ENCODE measurements at regions of chr14 and their contacts with region 1.

Region 1: DNA sequence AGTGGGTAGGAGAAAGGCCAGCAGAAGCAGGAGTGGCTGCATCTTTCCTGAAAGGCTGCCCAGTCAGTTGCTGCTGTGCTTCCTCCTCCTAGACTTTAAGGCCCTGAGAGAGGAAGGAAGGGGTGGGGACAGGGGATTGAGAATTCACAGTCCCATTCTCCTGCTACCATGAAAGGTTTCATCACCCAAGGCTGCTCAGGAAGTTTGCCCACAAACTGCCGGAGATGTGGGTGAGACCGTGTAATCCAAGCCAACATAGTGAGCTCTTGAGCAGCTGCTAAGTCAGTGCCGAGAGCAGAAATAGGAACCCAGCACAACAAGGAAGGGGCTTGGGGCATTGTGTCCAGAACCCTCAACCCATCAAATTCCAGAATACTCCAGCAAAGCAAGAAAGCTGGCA is at the start of gene CTSG:
- ATAC-seq: no peak
- H3K4me3 ChIP-seq: no peak within 1 kb of the TSS
- H3K27ac ChIP-seq: no peak within 1 kb of the TSS
- H3K4me1 ChIP-seq: peaks cover 0 to 3% of the 10 kb centered on the region in 2 donors
- total RNA-seq, gene CTSG: 0.25 to 1.4 (median 0.85) TPM in 5 of 8 experiments, not detected in the others

Region 2: GRCh38 chr14:24481622-24482324 is 94.4 kb before region 1 on chr14:
- in situ Hi-C with region 1: loop called in 1 of 9 experiments (anchors 25 kb)
- ATAC-seq: peak in 3 of 8 experiments; percentile 60 to 83 (median 74)
- H3K4me3 ChIP-seq: no peak overlapping the region
- H3K27ac ChIP-seq: no peak overlapping the region
- H3K4me1 ChIP-seq: no peaks in the 10 kb centered on the region

Region 3: DNA sequence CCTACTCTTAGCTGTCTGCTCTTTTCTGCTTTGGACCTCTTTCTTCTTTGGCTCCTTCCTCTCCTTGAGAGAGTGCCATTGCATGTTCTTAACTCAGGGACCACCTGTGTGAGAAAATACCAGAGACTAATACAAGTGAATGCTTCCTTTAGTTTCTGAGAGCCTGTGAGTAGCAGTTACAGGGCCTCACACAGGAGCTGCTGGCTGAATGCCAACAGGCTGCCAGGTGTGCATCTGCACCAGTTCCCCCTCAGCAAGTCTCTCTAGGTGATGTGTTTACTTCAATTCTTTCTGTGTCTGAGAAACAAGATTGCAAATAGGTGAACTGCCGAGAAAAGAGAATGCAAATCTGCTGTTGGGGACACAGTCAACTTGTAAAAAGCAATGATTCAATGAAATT is 365.5 kb after region 1 on chr14:
- in situ Hi-C with region 1: no loop called
- ATAC-seq: no peak
- H3K4me3 ChIP-seq: no peak overlapping the region
- H3K27ac ChIP-seq: no peak overlapping the region
- H3K4me1 ChIP-seq: peaks cover 3 to 6% of the 10 kb centered on the region in 2 donors